GM10248 (cell line): ENCODE measurements at regions of chr18 and their contacts with region 1.

Region 1: GRCh38 chr18:21612125-21612991 is at the start of gene SNRPD1:
- DNase-seq: peak; percentile 93
- CTCF ChIP-seq: peak; percentile 99

Region 2: GRCh38 chr18:21538230-21538629 is 74.1 kb before region 1 on chr18:
- CTCF ChIA-PET with region 1: no interaction called
- POLR2A ChIA-PET with region 1: no interaction called
- DNase-seq: no peak
- CTCF ChIP-seq: no peak

Region 3: GRCh38 chr18:21629089-21629832 is 16.9 kb after region 1 on chr18:
- CTCF ChIA-PET with region 1: interaction called, 24 read pairs
- POLR2A ChIA-PET with region 1: no interaction called
- DNase-seq: peak; percentile 24
- CTCF ChIP-seq: no peak